GM10248 (cell line): ENCODE measurements at regions of chr14 and their contacts with region 1.

Region 1: DNA sequence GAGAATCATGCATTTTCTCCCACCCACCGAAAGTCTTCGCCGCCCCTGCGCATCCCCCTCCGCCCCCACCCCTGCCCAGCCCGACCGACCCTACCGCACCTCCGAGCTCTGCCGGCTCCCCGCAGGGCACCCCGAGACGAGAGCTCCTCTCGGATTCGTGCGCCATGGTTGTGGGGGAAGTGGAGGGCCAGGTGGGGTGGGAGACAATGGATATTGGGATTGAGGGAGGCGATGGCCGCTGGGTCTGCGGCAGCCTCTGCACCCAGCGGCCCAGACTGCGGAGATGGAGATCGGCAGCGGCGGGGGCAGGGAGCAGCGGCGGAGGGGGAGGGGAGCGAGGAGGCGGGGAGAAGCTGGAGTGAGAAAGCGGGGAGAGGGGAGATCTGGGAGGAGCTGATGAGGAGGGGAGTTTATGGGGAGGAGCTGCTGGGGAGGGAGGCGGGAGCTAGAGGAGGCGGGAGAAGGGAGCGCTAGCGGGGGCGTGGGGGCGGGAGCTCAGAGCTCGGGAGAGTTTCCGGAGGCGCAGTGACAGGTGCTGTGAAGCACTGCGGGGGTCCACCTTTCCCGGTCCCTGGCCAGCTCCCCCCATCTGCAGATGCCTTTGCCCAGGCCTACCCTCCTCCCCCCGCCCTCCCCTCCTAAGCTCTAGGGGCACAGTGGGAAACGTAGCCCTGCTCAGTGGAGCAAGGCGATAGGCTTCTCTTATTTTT is at the start of gene SALL2:
- DNase-seq: peak; percentile 80
- CTCF ChIP-seq: no peak

Region 2: GRCh38 chr14:21510735-21511657 is 15.1 kb before region 1 on chr14 and contains the start of gene METTL3:
- CTCF ChIA-PET with region 1: interaction called, 11 read pairs
- POLR2A ChIA-PET with region 1: interaction called, 13 read pairs
- DNase-seq: peak; percentile 92
- CTCF ChIP-seq: no peak

Region 3: DNA sequence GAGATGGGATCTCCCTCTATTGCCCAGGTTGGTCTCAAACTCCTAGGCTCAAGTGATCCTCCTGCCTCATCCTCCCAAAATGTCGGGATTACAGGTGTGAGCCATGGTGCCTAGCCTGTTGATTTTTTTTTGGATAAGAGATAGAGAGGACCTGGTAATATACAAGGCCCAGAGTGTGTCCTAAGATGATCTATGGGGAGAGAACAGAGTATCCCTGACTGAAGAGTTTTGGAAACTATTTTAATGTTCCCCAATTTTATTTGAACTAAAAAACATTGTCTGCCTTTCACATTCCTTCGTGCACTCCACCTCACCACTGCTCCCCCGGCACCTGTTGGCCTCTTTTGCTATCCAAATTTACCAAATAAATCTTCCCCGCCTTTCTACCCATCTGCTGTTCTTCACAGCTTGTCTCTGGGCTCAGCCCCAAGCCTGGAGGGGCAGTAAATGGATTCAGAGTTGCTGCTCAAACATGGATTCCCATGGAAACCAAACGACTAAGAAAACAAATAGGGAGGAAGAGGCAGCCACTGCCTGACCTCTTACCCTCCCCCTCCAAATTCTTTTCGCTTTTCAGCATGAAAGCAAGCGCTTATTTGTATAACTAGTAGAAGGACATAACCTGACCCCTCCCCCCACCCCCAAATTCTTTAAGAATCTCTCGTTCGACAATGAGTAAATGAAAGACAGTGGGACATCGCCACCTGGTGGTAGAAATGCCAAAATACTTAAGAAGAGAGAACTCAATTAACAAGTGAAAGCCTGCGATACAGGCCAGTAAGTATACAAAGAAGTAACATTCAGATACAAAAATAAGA is 31.2 kb after region 1 on chr14:
- CTCF ChIA-PET with region 1: interaction called, 13 read pairs
- POLR2A ChIA-PET with region 1: interaction called, 3 read pairs
- DNase-seq: peak; percentile 64
- CTCF ChIP-seq: peak; percentile 58

Region 4: DNA sequence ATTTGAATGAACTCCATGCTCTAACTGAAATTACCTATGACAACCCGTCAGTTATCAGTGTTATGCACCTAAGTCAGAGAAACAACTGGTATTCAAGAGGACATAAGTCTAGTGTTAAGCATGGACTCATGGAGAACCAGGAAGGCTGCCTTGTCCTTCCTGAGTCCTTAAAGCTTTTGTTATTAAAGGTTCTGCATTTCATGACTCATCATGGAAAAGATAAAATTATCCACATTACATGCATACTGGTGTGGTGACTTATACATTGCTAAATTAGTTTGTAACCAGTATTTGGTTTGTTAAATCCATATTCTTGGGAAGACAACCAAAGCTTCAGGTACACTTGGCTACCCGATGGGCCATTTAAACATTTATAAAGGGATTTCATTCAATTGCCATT is 154.0 kb after region 1 on chr14:
- CTCF ChIA-PET with region 1: no interaction called
- POLR2A ChIA-PET with region 1: no interaction called
- DNase-seq: no peak
- CTCF ChIP-seq: no peak

Region 5: GRCh38 chr14:22391912-22392421 is 865.9 kb after region 1 on chr14:
- CTCF ChIA-PET with region 1: no interaction called
- POLR2A ChIA-PET with region 1: no interaction called
- DNase-seq: peak; percentile 63
- CTCF ChIP-seq: peak; percentile 75